Endothelial cell of umbilical vein (primary cell): ENCODE measurements at regions of chr14 and their contacts with region 1.

Region 1: DNA sequence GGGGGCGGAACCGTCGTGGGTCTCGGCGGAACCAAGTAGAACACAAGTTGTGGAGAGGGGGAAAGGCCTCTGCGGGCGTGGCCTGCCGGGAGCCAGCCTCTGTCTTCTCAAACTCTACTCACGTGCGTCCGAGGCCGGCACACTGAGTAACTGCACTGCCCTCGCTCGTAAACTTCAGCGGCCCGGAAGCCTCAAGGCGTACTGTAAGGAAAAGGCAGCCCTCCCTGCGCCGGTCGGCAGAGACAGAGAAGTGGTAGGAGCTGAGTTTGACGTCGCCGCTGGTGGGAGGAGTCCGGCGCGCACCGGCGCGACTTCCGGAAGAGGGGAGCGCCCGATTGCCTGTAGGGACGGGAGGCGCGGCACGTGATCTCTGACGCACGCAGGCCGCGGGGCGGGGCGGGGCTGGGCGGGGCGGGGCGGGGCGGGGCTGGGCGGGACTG is at the start of gene FBXO33:
- DNase-seq: peak; percentile 96
- H3K4me3 ChIP-seq: peak within 1 kb of the TSS; percentile 81 to 85 (median 84)
- H3K27ac ChIP-seq: peak within 1 kb of the TSS; percentile 99
- H3K4me1 ChIP-seq: peaks cover 27% of the 10 kb centered on the region
- H3K27me3 ChIP-seq: no peaks in the 10 kb centered on the region
- CTCF ChIP-seq: no peak
- POLR2A ChIP-seq: no peak
- total RNA-seq, gene FBXO33: 5.0 and 6.3 TPM in 2 replicates

Region 2: DNA sequence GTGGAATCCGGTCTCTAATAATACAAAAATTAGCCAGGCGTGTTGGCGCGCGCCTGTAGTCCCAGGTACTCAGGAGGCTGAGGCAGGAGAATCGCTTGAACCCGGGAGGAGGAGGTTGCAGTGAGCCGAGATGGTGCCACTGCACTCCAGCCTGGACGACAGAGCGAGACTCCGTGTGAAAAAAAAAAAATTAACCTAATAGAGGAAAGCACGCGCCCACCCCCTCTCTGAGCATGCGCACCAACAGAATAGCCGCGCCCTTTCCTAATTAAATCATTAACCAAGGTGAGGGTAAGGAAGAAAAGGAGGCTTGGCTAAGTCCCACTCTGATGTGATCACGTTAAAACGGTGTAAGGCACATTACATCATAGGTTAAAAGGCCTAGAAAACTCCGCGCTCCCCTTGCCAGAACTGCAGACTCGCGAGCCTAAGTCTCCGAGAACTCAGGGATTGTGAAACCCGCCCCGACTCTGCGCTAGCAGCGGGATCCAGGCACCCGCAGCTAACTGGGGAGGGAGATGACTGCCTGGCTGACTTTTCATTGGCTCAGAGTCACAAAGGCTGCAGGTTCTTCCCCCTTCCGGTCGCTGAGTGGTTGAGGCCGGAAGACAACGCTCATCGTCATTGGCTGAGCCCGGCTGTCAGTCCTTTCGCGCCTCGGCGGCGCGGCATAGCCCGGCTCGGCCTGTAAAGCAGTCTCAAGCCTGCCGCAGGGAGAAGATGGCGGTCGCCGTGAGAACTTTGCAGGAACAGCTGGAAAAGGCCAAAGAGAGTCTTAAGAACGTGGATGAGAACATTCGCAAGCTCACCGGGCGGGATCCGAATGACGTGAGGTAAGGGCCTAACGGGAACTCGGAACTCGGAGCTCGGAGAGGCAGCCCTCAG is 257.4 kb before region 1 on chr14 and contains the start of gene PNN:
- CTCF ChIA-PET with region 1: interaction called, 9 read pairs
- POLR2A ChIA-PET with region 1: interaction called, 8 read pairs
- dilution Hi-C with region 1: no loop called
- intact Hi-C with region 1: loop called (anchors 1 kb)
- DNase-seq: peak; percentile 100
- H3K4me3 ChIP-seq: peak within 1 kb of the TSS; percentile 69 to 92 (median 92)
- H3K27ac ChIP-seq: peak within 1 kb of the TSS; percentile 87
- H3K4me1 ChIP-seq: peaks cover 43% of the 10 kb centered on the region
- H3K27me3 ChIP-seq: no peaks in the 10 kb centered on the region
- CTCF ChIP-seq: no peak
- POLR2A ChIP-seq: peak; percentile 83
- total RNA-seq, gene PNN: 79.4 and 83.5 TPM in 2 replicates

Region 3: DNA sequence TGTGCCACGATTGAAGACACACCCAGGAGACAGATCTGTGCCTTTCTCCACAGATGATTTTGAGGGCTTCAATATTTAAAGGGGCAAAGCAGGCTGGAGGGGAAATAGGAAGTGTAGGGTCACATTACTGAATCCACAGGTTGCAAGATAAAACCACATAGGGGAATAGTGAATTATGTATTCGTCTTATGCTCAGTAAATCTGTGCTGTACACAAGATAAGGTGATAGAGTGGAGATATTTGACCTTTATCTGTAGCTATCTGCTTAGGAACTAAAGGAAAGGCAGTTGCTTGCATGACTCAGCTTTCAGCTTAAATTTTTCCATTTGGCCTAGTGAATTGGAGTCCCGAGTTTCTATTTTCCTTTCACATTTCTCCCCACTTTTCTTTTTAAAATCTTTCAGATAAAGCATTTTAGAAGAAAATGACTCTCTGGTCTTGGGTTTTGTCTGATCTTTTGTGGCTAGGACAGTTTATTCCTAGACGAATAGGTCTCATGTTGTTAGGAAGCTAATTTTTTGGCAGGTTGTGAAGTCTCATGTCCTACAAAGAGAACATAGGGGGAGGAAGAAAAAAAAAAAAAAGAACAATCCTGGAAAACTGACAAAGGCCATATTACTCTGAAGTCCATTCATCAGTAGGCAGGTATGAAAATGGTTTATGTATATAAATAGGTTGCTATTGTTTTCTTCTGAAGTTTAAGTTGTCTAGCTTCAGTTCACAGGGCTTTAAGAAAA is 55.4 kb before region 1 on chr14:
- CTCF ChIA-PET with region 1: interaction called, 7 read pairs
- POLR2A ChIA-PET with region 1: interaction called, 5 read pairs
- dilution Hi-C with region 1: no loop called
- intact Hi-C with region 1: loop called (anchors 2 kb)
- DNase-seq: peak; percentile 77
- H3K4me3 ChIP-seq: no peak overlapping the region
- H3K27ac ChIP-seq: peak overlapping the region; percentile 87
- H3K4me1 ChIP-seq: peaks cover 34% of the 10 kb centered on the region
- H3K27me3 ChIP-seq: no peaks in the 10 kb centered on the region
- CTCF ChIP-seq: no peak
- POLR2A ChIP-seq: no peak

Region 4: DNA sequence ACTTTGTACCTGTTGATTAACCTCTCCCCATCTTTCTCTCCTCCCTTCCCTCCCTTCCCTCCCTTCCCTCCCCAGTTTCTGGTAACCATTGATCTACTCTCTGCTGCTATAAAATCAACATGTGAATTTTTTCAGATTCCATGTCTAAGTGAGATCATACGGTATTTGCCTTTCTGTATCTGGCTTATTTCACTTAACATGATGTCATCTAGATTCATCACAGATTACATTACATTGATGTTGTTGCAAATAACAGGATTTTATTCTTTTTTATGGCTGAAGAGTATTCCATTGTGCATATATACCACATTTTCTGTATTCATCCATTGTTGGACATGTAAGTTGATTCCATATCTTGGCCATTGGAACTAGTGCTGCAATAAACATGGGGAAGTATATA is 68.1 kb after region 1 on chr14:
- CTCF ChIA-PET with region 1: no interaction called
- POLR2A ChIA-PET with region 1: no interaction called
- dilution Hi-C with region 1: no loop called
- intact Hi-C with region 1: no loop called
- DNase-seq: no peak
- H3K4me3 ChIP-seq: no peak overlapping the region
- H3K27ac ChIP-seq: no peak overlapping the region
- H3K4me1 ChIP-seq: no peaks in the 10 kb centered on the region
- H3K27me3 ChIP-seq: no peaks in the 10 kb centered on the region
- CTCF ChIP-seq: no peak
- POLR2A ChIP-seq: no peak